CD8-positive, alpha-beta T cell (primary cell): ENCODE measurements at regions of chr3 and their contacts with region 1.

Region 1: DNA sequence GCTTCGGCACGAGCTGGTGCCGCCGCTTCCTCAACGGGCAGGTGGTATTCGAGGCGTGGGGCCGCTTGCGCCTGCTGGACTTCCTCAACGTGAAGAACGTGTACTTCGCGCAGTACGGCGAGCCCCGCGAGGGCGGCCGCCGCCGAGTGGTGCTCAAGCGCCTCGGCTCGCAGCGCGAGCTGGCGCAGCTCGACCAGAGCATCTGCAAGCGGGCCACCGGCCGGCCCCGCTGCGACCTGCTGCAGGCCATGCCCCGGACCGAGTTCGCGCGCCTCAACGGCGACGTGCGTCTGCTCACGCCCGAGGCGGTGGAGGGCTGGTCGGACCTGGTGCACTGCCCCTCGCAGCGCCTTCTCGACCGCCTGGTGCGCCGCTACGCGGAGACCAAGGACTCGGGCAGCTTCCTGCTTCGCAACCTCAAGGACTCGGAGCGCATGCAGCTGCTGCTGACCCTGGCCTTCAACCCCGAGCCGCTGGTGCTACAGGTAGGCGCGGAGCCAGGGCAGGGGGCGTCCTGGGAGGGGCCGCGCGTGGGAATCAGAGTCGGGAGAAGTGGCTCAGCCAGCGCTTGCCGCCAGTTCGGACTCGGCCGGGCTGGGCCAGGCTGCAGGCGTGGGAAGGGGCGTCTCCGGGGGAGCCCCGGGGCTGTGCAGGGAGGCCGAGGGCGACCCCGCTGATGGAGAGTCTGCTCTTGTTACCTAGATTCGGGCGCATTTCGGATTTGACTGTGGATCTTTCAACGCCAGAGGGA is 1.1 kb downstream of the DIPK2A start:
- DNase-seq: peak; percentile 28 to 91 (median 52)
- ATAC-seq: no peak
- H3K4me3 ChIP-seq: peak overlapping the region; percentile 75 to 89
- H3K4me3 Mint-ChIP-seq: peak overlapping the region; percentile 95
- H3K27ac ChIP-seq: peak overlapping the region; percentile 69 to 82
- H3K27ac Mint-ChIP-seq: peak overlapping the region; percentile 93
- H3K4me1 ChIP-seq: peaks cover 34% of the 10 kb centered on the region
- H3K4me1 Mint-ChIP-seq: peaks cover 39% of the 10 kb centered on the region
- H3K27me3 ChIP-seq: no peaks in the 10 kb centered on the region
- H3K27me3 Mint-ChIP-seq: peaks cover 5% of the 10 kb centered on the region
- CTCF ChIP-seq: peak; percentile 51

Region 2: DNA sequence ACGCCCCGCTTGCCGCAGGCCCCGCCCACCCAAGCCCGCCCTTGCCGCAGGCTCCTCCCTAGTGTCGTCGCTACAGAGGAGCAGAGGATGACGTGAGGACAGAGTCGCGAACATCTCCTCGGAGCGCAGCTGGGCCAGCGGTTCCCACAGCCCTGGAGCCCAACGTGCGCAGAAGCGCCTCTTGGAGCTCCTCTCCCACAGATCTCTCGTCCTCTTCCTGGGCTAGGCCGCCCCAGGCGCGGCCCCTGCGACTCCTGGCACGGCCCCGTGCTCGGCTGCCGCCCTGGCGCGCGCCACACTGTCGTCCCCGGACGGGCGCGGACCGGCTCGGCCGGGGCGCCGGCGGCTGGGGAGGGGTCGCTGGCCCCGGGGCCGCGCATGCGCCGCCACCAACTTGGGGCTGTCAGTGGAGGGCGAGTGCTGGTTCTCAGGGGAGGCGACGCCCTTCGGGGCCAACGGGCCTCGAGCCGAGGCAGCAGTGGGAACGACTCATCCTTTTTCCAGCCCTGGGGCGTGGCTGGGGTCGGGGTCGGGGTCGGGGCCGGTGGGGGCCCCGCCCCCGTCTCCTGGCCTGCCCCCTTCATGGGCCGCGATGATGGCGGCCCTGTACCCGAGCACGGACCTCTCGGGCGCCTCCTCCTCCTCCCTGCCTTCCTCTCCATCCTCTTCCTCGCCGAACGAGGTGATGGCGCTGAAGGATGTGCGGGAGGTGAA is 1248.6 kb before region 1 on chr3 and contains the start of gene TRPC1:
- CTCF ChIA-PET with region 1: no interaction called
- POLR2A ChIA-PET with region 1: interaction called, 3 read pairs
- intact Hi-C with region 1: loop called (anchors 5 kb)
- DNase-seq: peak; percentile 2 to 93 (median 70)
- ATAC-seq: peak; percentile 96
- H3K4me3 ChIP-seq: peak within 1 kb of the TSS; percentile 54 to 63
- H3K4me3 Mint-ChIP-seq: peak within 1 kb of the TSS; percentile 91
- H3K27ac ChIP-seq: peak within 1 kb of the TSS in 1 of 2 experiments; percentile 63
- H3K27ac Mint-ChIP-seq: peak within 1 kb of the TSS; percentile 92
- H3K4me1 ChIP-seq: peaks cover 9% of the 10 kb centered on the region
- H3K4me1 Mint-ChIP-seq: peaks cover 20% of the 10 kb centered on the region
- H3K27me3 ChIP-seq: peaks cover 0 to 3% of the 10 kb centered on the region in 2 experiments
- H3K27me3 Mint-ChIP-seq: peaks cover 28% of the 10 kb centered on the region
- CTCF ChIP-seq: no peak
- total RNA-seq, gene TRPC1: 3.3 to 3.4 TPM

Region 3: GRCh38 chr3:143751643-143752178 is 221.0 kb before region 1 on chr3:
- CTCF ChIA-PET with region 1: no interaction called
- POLR2A ChIA-PET with region 1: interaction called, 11 read pairs
- intact Hi-C with region 1: no loop called
- DNase-seq: peak in 8 of 9 experiments; percentile 4 to 70 (median 26)
- ATAC-seq: peak; percentile 87
- H3K4me3 ChIP-seq: peak overlapping the region; percentile 7 to 11
- H3K4me3 Mint-ChIP-seq: peak overlapping the region; percentile 68
- H3K27ac ChIP-seq: peak overlapping the region; percentile 59 to 61
- H3K27ac Mint-ChIP-seq: peak overlapping the region; percentile 95
- H3K4me1 ChIP-seq: peaks cover 34% of the 10 kb centered on the region
- H3K4me1 Mint-ChIP-seq: peaks cover 44% of the 10 kb centered on the region
- H3K27me3 ChIP-seq: no peaks in the 10 kb centered on the region
- H3K27me3 Mint-ChIP-seq: no peaks in the 10 kb centered on the region
- CTCF ChIP-seq: no peak

Region 4: DNA sequence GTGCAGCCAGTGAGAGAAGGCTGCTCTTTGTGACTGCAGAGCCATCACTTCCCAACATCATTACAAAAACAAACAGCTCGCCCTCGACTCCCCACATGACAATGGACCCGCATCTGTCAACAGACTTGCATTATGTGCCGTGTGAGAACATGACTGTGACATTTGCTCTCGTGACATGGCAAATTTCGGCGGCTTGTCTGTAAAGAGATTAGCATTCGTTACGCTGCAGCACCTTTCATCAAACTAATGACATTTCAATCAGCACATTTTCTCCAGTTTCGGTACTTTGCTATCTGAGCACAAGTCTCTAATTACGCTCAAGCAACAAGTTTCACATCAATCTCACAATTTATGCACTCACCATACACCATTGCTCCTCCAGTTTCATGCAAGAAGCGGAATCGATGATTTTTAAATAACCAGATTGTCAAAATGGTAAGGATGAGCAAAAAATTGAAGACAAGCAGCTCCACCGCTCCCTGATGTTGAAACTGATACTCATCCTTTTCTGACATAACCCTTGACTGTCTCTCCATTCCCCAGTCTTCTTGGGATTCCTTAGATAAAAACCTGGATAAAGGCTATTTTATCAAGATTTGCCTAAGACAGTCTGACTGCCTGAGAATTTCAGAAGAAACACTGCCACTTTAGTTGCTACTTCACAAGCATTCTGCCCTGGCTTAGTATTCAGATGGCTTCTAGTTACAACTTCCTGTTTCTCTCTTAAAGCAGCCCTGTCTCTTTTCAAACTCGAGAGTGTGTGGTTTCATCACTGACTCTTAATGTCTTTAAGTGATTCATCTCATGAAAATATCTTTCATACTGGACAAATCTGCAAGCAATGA is 124.7 kb before region 1 on chr3 and contains the start of gene SLC9A9:
- CTCF ChIA-PET with region 1: interaction called, 3 read pairs
- POLR2A ChIA-PET with region 1: interaction called, 9 read pairs
- intact Hi-C with region 1: loop called (anchors 1 to 5 kb)
- DNase-seq: peak in 8 of 9 experiments; percentile 7 to 65 (median 32)
- ATAC-seq: peak; percentile 87
- H3K4me3 ChIP-seq: peak within 1 kb of the TSS; percentile 57 to 74
- H3K4me3 Mint-ChIP-seq: peak within 1 kb of the TSS; percentile 96
- H3K27ac ChIP-seq: peak within 1 kb of the TSS; percentile 27 to 67
- H3K27ac Mint-ChIP-seq: peak within 1 kb of the TSS; percentile 91
- H3K4me1 ChIP-seq: peaks cover 24% of the 10 kb centered on the region
- H3K4me1 Mint-ChIP-seq: peaks cover 53% of the 10 kb centered on the region
- H3K27me3 ChIP-seq: no peaks in the 10 kb centered on the region
- H3K27me3 Mint-ChIP-seq: no peaks in the 10 kb centered on the region
- CTCF ChIP-seq: no peak
- total RNA-seq, gene SLC9A9: 6.8 to 7.5 TPM

Region 5: DNA sequence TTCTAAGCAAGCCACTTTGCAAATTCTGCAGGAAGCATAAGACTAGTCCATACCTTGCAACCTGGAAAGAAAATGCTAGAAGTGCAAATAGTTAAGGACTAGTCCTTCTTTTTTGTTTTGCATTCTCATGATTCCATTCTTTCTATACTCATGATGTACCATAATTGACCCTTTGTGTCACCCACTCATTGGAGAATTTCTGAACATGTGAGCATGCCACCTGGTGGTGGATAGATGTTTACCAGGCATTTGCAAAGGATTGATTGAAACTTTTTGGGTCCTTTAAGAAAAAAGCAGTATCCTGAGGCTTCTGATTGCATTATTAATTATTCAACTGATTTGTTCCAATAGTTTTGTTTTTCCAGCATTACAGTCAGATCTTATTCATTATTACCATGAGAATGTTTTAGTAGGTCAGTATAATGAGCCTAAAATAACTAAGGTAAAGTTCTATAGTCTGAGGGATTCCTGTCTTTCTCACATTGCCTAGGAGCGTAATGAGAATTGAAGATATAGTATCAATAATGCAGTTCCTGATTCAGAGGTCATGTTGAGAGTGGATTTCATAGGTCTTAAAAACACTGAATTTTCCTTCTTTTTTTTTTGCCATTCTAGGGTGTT is 21.2 kb before region 1 on chr3:
- CTCF ChIA-PET with region 1: interaction called, 6 read pairs
- POLR2A ChIA-PET with region 1: interaction called, 7 read pairs
- intact Hi-C with region 1: loop called in 1 of 2 experiments (anchors 2 kb)
- DNase-seq: peak in 4 of 9 experiments; percentile 9 to 60 (median 38)
- ATAC-seq: no peak
- H3K4me3 ChIP-seq: no peak overlapping the region
- H3K4me3 Mint-ChIP-seq: no peak overlapping the region
- H3K27ac ChIP-seq: no peak overlapping the region
- H3K27ac Mint-ChIP-seq: no peak overlapping the region
- H3K4me1 ChIP-seq: no peaks in the 10 kb centered on the region
- H3K4me1 Mint-ChIP-seq: peaks cover 3% of the 10 kb centered on the region
- H3K27me3 ChIP-seq: no peaks in the 10 kb centered on the region
- H3K27me3 Mint-ChIP-seq: peaks cover 5% of the 10 kb centered on the region
- CTCF ChIP-seq: peak; percentile 67

Region 6: GRCh38 chr3:145963111-145963510 is 1990.4 kb after region 1 on chr3:
- CTCF ChIA-PET with region 1: no interaction called
- POLR2A ChIA-PET with region 1: no interaction called
- intact Hi-C with region 1: no loop called
- DNase-seq: no peak
- ATAC-seq: no peak
- H3K4me3 ChIP-seq: no peak overlapping the region
- H3K4me3 Mint-ChIP-seq: no peak overlapping the region
- H3K27ac ChIP-seq: no peak overlapping the region
- H3K27ac Mint-ChIP-seq: no peak overlapping the region
- H3K4me1 ChIP-seq: no peaks in the 10 kb centered on the region
- H3K4me1 Mint-ChIP-seq: no peaks in the 10 kb centered on the region
- H3K27me3 ChIP-seq: no peaks in the 10 kb centered on the region
- H3K27me3 Mint-ChIP-seq: no peaks in the 10 kb centered on the region
- CTCF ChIP-seq: no peak